Calu3 (cell line): ENCODE measurements at regions of chr15 and their contacts with region 1.

Region 1: GRCh38 chr15:72168111-72168808 is 29.3 kb downstream of the GRAMD2A start:
- DNase-seq: no peak
- H3K4me3 Mint-ChIP-seq: no peak overlapping the region
- H3K27ac Mint-ChIP-seq: no peak overlapping the region
- H3K4me1 Mint-ChIP-seq: peaks cover 8% of the 10 kb centered on the region
- H3K27me3 Mint-ChIP-seq: no peaks in the 10 kb centered on the region
- CTCF ChIP-seq: no peak

Region 2: GRCh38 chr15:70293591-70294470 is 1874.4 kb before region 1 on chr15:
- CTCF ChIA-PET with region 1: interaction called, 12 read pairs
- intact Hi-C with region 1: no loop called
- DNase-seq: no peak
- H3K4me3 Mint-ChIP-seq: no peak overlapping the region
- H3K27ac Mint-ChIP-seq: no peak overlapping the region
- H3K4me1 Mint-ChIP-seq: peaks cover 12% of the 10 kb centered on the region
- H3K27me3 Mint-ChIP-seq: peaks cover 30% of the 10 kb centered on the region
- CTCF ChIP-seq: no peak

Region 3: DNA sequence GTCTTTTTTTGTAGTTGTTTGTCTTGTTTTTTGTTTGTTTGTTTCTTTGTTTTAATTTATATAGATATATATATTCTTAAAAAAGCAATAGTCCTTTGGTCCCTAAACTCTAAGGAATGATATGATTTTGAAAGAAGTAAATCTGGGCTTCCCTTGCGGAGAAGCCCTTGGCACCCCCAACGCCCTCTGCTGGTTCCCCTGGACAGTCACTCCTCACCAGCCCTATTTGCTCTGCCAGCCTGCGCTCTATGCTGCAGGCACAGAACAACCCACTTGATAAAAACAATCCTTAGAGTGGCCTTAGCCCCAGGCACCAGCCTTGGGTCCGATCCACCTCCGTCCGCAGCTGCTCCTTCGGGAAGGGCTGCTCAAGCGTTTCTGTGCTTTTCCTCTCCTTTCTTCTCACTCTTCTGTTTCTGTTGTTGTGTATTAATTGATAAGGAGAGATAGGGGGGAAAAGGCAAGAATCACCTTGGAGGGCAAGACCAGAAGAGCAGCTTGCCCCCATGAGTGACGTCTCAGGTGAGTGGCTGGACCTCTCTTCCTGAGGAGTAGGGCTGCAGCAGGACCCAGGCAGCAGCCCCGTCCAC is 117.8 kb after region 1 on chr15:
- CTCF ChIA-PET with region 1: no interaction called
- intact Hi-C with region 1: no loop called
- DNase-seq: peak; percentile 75
- H3K4me3 Mint-ChIP-seq: no peak overlapping the region
- H3K27ac Mint-ChIP-seq: no peak overlapping the region
- H3K4me1 Mint-ChIP-seq: no peaks in the 10 kb centered on the region
- H3K27me3 Mint-ChIP-seq: peaks cover 8% of the 10 kb centered on the region
- CTCF ChIP-seq: peak; percentile 41